Ovary (tissue), 10 donors: ENCODE measurements at regions of chr13 and their contacts with region 1.

Region 1: DNA sequence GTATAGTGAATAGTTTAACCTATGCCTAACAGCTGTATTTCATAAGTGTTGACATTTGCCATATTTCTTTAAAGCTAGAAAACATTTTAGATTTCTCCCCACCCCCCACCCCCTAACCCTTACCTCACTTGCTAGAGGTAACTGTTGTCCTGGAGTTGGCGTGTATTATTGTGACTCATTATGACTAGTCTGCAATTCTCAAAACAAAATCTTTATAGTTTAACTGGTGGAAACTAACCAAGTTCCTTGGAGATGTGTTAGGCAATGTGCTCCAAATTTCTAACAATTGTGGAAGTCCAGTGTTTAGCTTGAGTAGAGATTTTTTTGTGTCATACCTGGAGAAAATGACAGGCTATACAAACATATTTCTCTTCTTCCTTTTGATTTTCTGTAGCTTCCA is 38.0 kb downstream of the KCTD4 start:
- DNase-seq: no peak
- H3K4me3 ChIP-seq: no peak overlapping the region
- H3K27ac ChIP-seq: no peak overlapping the region
- H3K4me1 ChIP-seq: no peaks in the 10 kb centered on the region
- H3K27me3 ChIP-seq: no peaks in the 10 kb centered on the region
- CTCF ChIP-seq: no peak
- EP300 ChIP-seq: no peak
- POLR2A ChIP-seq: no peak

Region 2: DNA sequence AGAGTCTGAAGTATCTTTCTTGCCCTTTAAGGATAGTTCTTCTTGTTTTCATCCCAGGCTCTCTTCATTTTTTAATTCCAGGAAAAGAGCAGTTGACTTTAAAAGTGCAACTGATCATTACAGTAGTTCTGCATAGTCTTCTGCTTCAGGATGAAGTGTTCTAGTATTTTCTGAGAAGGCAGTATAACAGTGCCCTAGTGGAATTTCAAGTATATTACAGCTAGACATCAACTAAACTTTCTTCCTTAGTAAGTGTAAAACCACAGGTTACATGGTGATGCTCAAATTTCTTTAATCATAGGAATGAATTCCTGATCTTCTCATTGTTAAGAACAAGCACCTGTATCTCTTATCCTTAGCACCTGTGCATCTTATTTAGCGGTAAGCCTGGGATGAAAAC is 184.5 kb before region 1 on chr13:
- intact Hi-C with region 1: no loop called
- DNase-seq: no peak
- H3K4me3 ChIP-seq: no peak overlapping the region
- H3K27ac ChIP-seq: no peak overlapping the region
- H3K4me1 ChIP-seq: no peaks in the 10 kb centered on the region
- H3K27me3 ChIP-seq: no peaks in the 10 kb centered on the region
- CTCF ChIP-seq: no peak
- EP300 ChIP-seq: no peak
- POLR2A ChIP-seq: no peak

Region 3: DNA sequence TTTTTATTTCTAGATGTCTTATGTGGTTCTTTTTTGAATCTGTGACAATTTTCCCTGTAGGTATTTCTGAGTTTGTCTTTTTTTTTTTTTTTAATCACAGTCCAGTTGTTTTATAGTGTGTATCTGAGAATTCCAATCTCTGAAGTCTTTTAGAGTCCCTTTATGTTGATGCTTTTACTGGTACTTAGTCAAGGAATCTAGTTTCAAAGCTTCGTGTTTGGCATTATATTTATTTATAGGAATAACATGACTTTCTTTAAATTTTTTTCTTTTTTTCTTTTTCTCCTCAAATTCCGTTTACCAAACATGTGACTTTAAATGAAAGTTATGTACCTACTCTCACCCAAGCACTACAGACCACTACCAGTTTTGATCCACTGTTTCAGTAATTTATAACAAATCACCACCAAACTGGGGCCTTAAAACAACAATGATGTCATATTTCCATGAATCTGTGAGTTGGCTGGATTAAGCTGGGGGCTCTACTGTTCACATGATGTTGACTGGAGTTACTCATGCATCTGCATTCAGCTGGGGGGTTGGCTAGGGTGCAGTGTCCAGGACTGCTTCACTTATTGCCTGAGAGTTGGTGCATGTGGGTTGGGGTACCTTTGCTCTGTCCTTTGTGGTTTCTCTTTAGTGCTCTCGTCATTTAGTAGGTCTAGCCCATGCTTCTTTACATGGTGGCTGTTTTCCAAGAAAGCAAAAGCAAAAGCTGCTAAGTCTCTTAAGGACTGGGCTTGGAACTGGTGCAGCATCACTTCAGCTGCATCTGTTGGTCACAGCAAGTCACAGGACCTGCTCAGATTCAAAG is 15.7 kb after region 1 on chr13:
- intact Hi-C with region 1: loop called in 1 of 4 experiments (anchors 2 kb)
- DNase-seq: no peak
- H3K4me3 ChIP-seq: no peak overlapping the region
- H3K27ac ChIP-seq: no peak overlapping the region
- H3K4me1 ChIP-seq: no peaks in the 10 kb centered on the region
- H3K27me3 ChIP-seq: no peaks in the 10 kb centered on the region
- CTCF ChIP-seq: no peak
- EP300 ChIP-seq: no peak
- POLR2A ChIP-seq: no peak